Natural killer cell (primary cell): ENCODE measurements at regions of chr1 and their contacts with region 1.

Region 1: GRCh38 chr1:160711602-160712311 is at the start of gene CD48:
- DNase-seq: peak; percentile 41 to 83
- ATAC-seq: peak; percentile 33 to 54 (median 47)
- H3K4me3 ChIP-seq: peak within 1 kb of the TSS; percentile 80
- H3K4me3 Mint-ChIP-seq: no peak within 1 kb of the TSS
- H3K27ac ChIP-seq: peak within 1 kb of the TSS; percentile 94
- H3K27ac Mint-ChIP-seq: no peak within 1 kb of the TSS
- H3K4me1 ChIP-seq: peaks cover 53% of the 10 kb centered on the region
- H3K4me1 Mint-ChIP-seq: peaks cover 17 to 26% of the 10 kb centered on the region in 2 donors
- H3K27me3 ChIP-seq: no peaks in the 10 kb centered on the region
- H3K27me3 Mint-ChIP-seq: no peaks in the 10 kb centered on the region
- CTCF ChIP-seq: no peak
- total RNA-seq, gene CD48: 213 to 249 (median 223) TPM

Region 2: GRCh38 chr1:160637821-160638539 is 73.8 kb before region 1 on chr1:
- intact Hi-C with region 1: loop called (anchors 5 kb)
- DNase-seq: peak; percentile 21 to 87
- ATAC-seq: peak; percentile 73 to 90 (median 83)
- H3K4me3 ChIP-seq: no peak overlapping the region
- H3K4me3 Mint-ChIP-seq: peak overlapping the region; percentile 79
- H3K27ac ChIP-seq: peak overlapping the region; percentile 65
- H3K27ac Mint-ChIP-seq: peak overlapping the region; percentile 50 to 81
- H3K4me1 ChIP-seq: peaks cover 54% of the 10 kb centered on the region
- H3K4me1 Mint-ChIP-seq: peaks cover 59 to 60% of the 10 kb centered on the region in 2 donors
- H3K27me3 ChIP-seq: no peaks in the 10 kb centered on the region
- H3K27me3 Mint-ChIP-seq: peaks cover 0 to 4% of the 10 kb centered on the region in 2 donors
- CTCF ChIP-seq: no peak

Region 3: DNA sequence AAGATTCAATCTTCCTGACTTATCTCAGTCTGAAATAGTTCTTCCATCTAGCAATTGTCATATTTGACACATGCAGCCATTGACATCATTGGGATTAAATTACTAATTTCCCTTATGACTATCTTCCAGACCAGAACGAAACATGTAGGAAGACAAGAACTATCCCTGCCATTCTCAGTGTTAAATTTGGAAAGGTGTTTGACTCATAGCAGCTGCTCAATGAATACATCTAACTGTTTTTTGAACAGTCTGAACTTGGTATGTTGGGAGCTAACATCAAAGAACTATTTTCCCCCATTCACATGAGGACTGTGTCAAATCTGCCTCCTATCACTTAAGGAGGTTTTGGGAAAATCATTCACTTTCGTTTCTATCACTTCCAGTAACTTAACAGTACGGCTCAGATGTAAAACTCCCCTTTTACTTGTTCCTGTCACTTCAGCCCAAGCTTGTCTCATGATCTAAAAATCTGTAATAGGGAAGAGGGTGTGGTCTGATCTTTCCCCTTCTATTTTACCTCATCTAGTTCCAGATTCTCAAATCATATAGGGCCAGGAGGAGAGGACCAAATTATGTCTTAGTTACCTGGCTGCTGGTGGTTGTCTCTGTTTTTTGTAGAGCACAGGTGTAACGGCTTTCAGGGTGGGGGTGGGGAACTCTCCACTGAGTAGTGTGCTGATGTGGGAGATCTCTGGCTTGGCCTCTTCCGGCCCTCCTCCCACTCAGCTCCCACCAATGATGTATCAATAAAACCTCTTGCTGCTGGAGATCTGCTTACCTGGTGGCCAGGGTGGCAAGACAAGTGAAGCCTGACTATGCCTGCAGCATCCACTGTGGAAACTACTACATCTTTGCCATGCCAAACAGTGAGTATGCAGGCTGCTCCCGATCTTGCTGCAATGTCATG is 38.7 kb before region 1 on chr1:
- intact Hi-C with region 1: no loop called
- DNase-seq: peak in 1 of 2 donors; percentile 60
- ATAC-seq: no peak
- H3K4me3 ChIP-seq: no peak overlapping the region
- H3K4me3 Mint-ChIP-seq: no peak overlapping the region
- H3K27ac ChIP-seq: no peak overlapping the region
- H3K27ac Mint-ChIP-seq: no peak overlapping the region
- H3K4me1 ChIP-seq: peaks cover 24% of the 10 kb centered on the region
- H3K4me1 Mint-ChIP-seq: peaks cover 8 to 15% of the 10 kb centered on the region in 2 donors
- H3K27me3 ChIP-seq: no peaks in the 10 kb centered on the region
- H3K27me3 Mint-ChIP-seq: no peaks in the 10 kb centered on the region
- CTCF ChIP-seq: no peak

Region 4: DNA sequence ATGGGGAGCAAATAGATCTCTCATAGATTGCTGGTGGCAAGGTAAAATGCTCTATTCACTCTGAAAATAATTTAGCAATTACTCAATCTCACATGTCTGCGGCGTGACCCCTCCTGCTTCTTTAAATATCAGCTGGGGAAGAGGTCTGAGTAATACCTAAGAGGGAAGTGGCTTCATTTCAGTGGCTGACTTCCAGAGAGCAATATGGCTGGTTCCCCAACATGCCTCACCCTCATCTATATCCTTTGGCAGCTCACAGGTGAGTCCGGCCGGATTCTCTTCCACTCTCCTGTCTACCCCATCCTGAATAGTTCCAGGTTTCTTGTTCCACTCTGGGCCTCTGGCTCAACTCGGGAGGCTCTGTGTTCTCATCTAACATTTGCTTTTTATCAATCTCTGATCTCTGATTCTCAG is 27.3 kb after region 1 on chr1 and contains the start of gene SLAMF7:
- intact Hi-C with region 1: loop called (anchors 1 kb)
- DNase-seq: peak; percentile 63 to 75
- ATAC-seq: peak; percentile 71 to 84 (median 76)
- H3K4me3 ChIP-seq: peak within 1 kb of the TSS; percentile 43
- H3K4me3 Mint-ChIP-seq: peak within 1 kb of the TSS; percentile 88
- H3K27ac ChIP-seq: peak within 1 kb of the TSS; percentile 87
- H3K27ac Mint-ChIP-seq: peak within 1 kb of the TSS; percentile 88 to 96
- H3K4me1 ChIP-seq: peaks cover 43% of the 10 kb centered on the region
- H3K4me1 Mint-ChIP-seq: peaks cover 74 to 91% of the 10 kb centered on the region in 2 donors
- H3K27me3 ChIP-seq: no peaks in the 10 kb centered on the region
- H3K27me3 Mint-ChIP-seq: no peaks in the 10 kb centered on the region
- CTCF ChIP-seq: no peak
- total RNA-seq, gene SLAMF7: 191 to 301 (median 227) TPM

Region 5: GRCh38 chr1:160768295-160768657 is 56.5 kb after region 1 on chr1:
- intact Hi-C with region 1: loop called (anchors 5 kb)
- DNase-seq: peak; percentile 77 to 95
- ATAC-seq: peak; percentile 88 to 98 (median 96)
- H3K4me3 ChIP-seq: peak overlapping the region; percentile 9
- H3K4me3 Mint-ChIP-seq: peak overlapping the region; percentile 97
- H3K27ac ChIP-seq: peak overlapping the region; percentile 83
- H3K27ac Mint-ChIP-seq: peak overlapping the region; percentile 98 to 99
- H3K4me1 ChIP-seq: peaks cover 17% of the 10 kb centered on the region
- H3K4me1 Mint-ChIP-seq: peaks cover 23 to 24% of the 10 kb centered on the region in 2 donors
- H3K27me3 ChIP-seq: no peaks in the 10 kb centered on the region
- H3K27me3 Mint-ChIP-seq: no peaks in the 10 kb centered on the region
- CTCF ChIP-seq: peak; percentile 91

Region 6: GRCh38 chr1:160813215-160813614 is 101.5 kb after region 1 on chr1:
- intact Hi-C with region 1: no loop called
- DNase-seq: no peak
- ATAC-seq: no peak
- H3K4me3 ChIP-seq: no peak overlapping the region
- H3K4me3 Mint-ChIP-seq: no peak overlapping the region
- H3K27ac ChIP-seq: no peak overlapping the region
- H3K27ac Mint-ChIP-seq: no peak overlapping the region
- H3K4me1 ChIP-seq: peaks cover 6% of the 10 kb centered on the region
- H3K4me1 Mint-ChIP-seq: peaks cover 13 to 37% of the 10 kb centered on the region in 2 donors
- H3K27me3 ChIP-seq: no peaks in the 10 kb centered on the region
- H3K27me3 Mint-ChIP-seq: no peaks in the 10 kb centered on the region
- CTCF ChIP-seq: no peak

Region 7: GRCh38 chr1:161427733-161428516 is 716.2 kb after region 1 on chr1:
- intact Hi-C with region 1: no loop called
- DNase-seq: peak in 1 of 2 donors; percentile 52
- ATAC-seq: peak in 2 of 3 donors; percentile 49 to 77
- H3K4me3 ChIP-seq: no peak overlapping the region
- H3K4me3 Mint-ChIP-seq: peak overlapping the region; percentile 47
- H3K27ac ChIP-seq: no peak overlapping the region
- H3K27ac Mint-ChIP-seq: peak overlapping the region; percentile 77 to 78
- H3K4me1 ChIP-seq: no peaks in the 10 kb centered on the region
- H3K4me1 Mint-ChIP-seq: peaks cover 17 to 24% of the 10 kb centered on the region in 2 donors
- H3K27me3 ChIP-seq: peaks cover 13% of the 10 kb centered on the region
- H3K27me3 Mint-ChIP-seq: peaks cover 12 to 25% of the 10 kb centered on the region in 2 donors
- CTCF ChIP-seq: no peak